Activated T-helper 2 cell treated with anti-CD3 and anti-CD28 coated beads, Interferon-gamma antibody, Interleukin-2, Interleukin-4, amounts not matched to agents 10 μg/mL and 5 μg/mL and 100 μg/mL, durations not matched to agents 14 hours and 24 hours and 36 hours (primary cell): ENCODE measurements at regions of chr7 and their contacts with region 1.

Region 1: GRCh38 chr7:80134536-80135320 is at the start of gene GNAI1:
- DNase-seq: peak; percentile 11
- H3K4me3 Mint-ChIP-seq: peak within 1 kb of the TSS; percentile 77
- H3K27ac Mint-ChIP-seq: peak within 1 kb of the TSS; percentile 60
- H3K4me1 Mint-ChIP-seq: peaks cover 26% of the 10 kb centered on the region
- H3K27me3 Mint-ChIP-seq: peaks cover 51% of the 10 kb centered on the region
- total RNA-seq, gene GNAI1: 6.4 and 7.5 TPM in 2 replicates

Region 2: DNA sequence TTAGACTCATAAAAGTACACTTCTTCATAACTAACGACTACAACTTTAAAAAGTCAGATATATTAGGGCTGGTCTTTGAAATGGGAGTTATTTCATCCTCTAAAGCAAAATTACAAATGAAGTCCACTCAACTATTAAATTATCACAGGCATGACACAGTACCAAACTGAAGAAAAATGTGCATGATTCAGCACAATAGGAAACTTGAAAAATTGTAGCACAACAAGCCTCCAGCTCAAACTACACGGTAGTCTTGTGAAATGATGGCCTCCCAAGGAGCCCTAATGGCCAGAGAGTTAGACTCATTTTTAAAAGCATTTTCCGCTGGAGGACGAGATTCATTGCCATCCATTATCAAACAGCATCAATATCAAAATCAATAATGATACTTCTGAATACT is 757.6 kb before region 1 on chr7:
- intact Hi-C with region 1: no loop called
- DNase-seq: no peak
- H3K4me3 Mint-ChIP-seq: no peak overlapping the region
- H3K27ac Mint-ChIP-seq: no peak overlapping the region
- H3K4me1 Mint-ChIP-seq: no peaks in the 10 kb centered on the region
- H3K27me3 Mint-ChIP-seq: no peaks in the 10 kb centered on the region

Region 3: DNA sequence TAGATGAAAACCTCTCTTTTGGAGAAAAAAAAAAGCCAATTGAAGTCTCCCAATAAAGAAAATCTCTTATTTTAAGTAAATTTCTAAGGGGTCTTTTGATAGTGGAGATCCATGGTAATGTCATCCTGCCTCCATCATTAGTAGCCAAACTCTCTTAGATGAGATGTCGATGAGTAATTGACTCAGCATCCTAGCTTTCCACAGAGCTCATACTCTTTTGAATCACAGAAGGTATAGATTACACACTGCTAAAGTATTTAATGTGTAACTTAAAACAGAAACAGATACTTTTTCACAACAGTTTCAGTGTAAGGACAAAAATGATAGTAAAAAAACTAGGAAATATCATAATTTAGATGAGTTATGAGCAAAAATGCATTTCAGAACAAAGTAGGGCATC is 700.6 kb before region 1 on chr7:
- intact Hi-C with region 1: no loop called
- DNase-seq: no peak
- H3K4me3 Mint-ChIP-seq: no peak overlapping the region
- H3K27ac Mint-ChIP-seq: no peak overlapping the region
- H3K4me1 Mint-ChIP-seq: no peaks in the 10 kb centered on the region
- H3K27me3 Mint-ChIP-seq: no peaks in the 10 kb centered on the region

Region 4: DNA sequence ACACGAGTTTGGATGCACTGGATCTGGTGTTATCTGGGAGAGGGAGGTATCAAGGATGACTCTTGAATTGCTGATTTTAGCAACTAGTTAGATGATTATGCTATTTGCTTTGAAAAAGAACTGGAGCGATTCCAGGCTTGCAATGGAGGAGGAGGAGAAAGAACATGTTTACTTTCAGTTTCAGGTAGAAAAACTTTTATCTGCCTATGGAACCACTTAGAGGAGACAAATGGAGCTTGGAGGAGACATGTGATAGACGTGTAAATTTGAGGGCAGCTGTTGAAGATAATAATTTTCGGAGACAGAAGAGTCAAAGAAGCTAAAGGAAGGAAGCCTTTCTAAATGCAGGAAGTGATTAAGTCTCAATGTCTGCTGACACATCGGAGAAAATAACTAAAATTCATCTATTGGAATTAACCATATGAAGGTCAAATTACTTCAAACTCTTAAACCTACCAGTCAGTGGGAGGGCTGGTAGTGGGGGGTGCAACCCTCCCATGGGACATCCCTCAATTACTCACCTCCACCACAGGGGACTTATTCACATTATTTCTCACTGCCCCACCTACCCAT is 56.5 kb before region 1 on chr7:
- intact Hi-C with region 1: loop called (anchors 5 kb)
- DNase-seq: no peak
- H3K4me3 Mint-ChIP-seq: peak overlapping the region; percentile 63
- H3K27ac Mint-ChIP-seq: peak overlapping the region; percentile 61
- H3K4me1 Mint-ChIP-seq: peaks cover 14% of the 10 kb centered on the region
- H3K27me3 Mint-ChIP-seq: no peaks in the 10 kb centered on the region

Region 5: DNA sequence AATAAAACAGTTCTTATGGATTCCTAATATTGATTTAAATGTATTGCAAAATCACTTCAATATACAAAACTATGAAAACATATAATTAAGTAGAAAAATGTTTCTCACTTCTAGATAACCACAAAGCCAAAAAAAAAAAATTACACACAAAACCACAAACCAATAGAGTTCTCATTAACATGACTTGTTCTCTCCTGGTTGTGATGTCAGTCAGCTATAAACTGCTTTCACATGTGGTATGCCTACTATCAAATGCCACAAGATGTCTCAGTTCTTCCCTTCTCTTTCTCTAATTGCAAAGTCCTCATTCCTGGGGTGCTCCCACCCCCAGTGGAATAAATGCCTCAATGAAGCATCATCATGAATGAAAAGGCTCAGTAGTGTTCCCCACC is 16.5 kb after region 1 on chr7:
- intact Hi-C with region 1: loop called (anchors 1 kb)
- DNase-seq: no peak
- H3K4me3 Mint-ChIP-seq: peak overlapping the region; percentile 37
- H3K27ac Mint-ChIP-seq: peak overlapping the region; percentile 62
- H3K4me1 Mint-ChIP-seq: peaks cover 23% of the 10 kb centered on the region
- H3K27me3 Mint-ChIP-seq: peaks cover 11% of the 10 kb centered on the region

Region 6: GRCh38 chr7:80161466-80161865 is 26.7 kb after region 1 on chr7:
- intact Hi-C with region 1: no loop called
- DNase-seq: no peak
- H3K4me3 Mint-ChIP-seq: no peak overlapping the region
- H3K27ac Mint-ChIP-seq: no peak overlapping the region
- H3K4me1 Mint-ChIP-seq: peaks cover 9% of the 10 kb centered on the region
- H3K27me3 Mint-ChIP-seq: no peaks in the 10 kb centered on the region

Region 7: GRCh38 chr7:80175744-80176143 is 41.0 kb after region 1 on chr7:
- intact Hi-C with region 1: loop called (anchors 1 kb)
- DNase-seq: no peak
- H3K4me3 Mint-ChIP-seq: no peak overlapping the region
- H3K27ac Mint-ChIP-seq: no peak overlapping the region
- H3K4me1 Mint-ChIP-seq: peaks cover 18% of the 10 kb centered on the region
- H3K27me3 Mint-ChIP-seq: no peaks in the 10 kb centered on the region

Region 8: GRCh38 chr7:80216996-80217842 is 82.5 kb after region 1 on chr7:
- intact Hi-C with region 1: loop called (anchors 1 kb)
- DNase-seq: no peak
- H3K4me3 Mint-ChIP-seq: no peak overlapping the region
- H3K27ac Mint-ChIP-seq: no peak overlapping the region
- H3K4me1 Mint-ChIP-seq: peaks cover 10% of the 10 kb centered on the region
- H3K27me3 Mint-ChIP-seq: no peaks in the 10 kb centered on the region

Region 9: GRCh38 chr7:80312139-80312661 is 177.5 kb after region 1 on chr7:
- intact Hi-C with region 1: loop called (anchors 5 kb)
- DNase-seq: no peak
- H3K4me3 Mint-ChIP-seq: no peak overlapping the region
- H3K27ac Mint-ChIP-seq: no peak overlapping the region
- H3K4me1 Mint-ChIP-seq: peaks cover 19% of the 10 kb centered on the region
- H3K27me3 Mint-ChIP-seq: no peaks in the 10 kb centered on the region

Region 10: GRCh38 chr7:80392229-80393169 is 257.8 kb after region 1 on chr7:
- intact Hi-C with region 1: loop called (anchors 5 kb)
- DNase-seq: no peak
- H3K4me3 Mint-ChIP-seq: no peak overlapping the region
- H3K27ac Mint-ChIP-seq: no peak overlapping the region
- H3K4me1 Mint-ChIP-seq: no peaks in the 10 kb centered on the region
- H3K27me3 Mint-ChIP-seq: no peaks in the 10 kb centered on the region